IMR-90 (cell line): ENCODE measurements at regions of chr4 and their contacts with region 1.

Region 1: GRCh38 chr4:36812153-36812552 is 432.4 kb upstream of the NWD2 start:
- DNase-seq: no peak
- ATAC-seq: no peak
- H3K4me3 ChIP-seq: no peak overlapping the region
- H3K27ac ChIP-seq: no peak overlapping the region
- H3K4me1 ChIP-seq: no peaks in the 10 kb centered on the region
- H3K27me3 ChIP-seq: no peaks in the 10 kb centered on the region
- CTCF ChIP-seq: no peak
- POLR2A ChIP-seq: no peak
- RAD21 ChIP-seq: no peak

Region 2: GRCh38 chr4:35216636-35217035 is 1595.5 kb before region 1 on chr4:
- CTCF ChIA-PET with region 1: no interaction called
- POLR2A ChIA-PET with region 1: no interaction called
- dilution Hi-C with region 1: no loop called
- in situ Hi-C with region 1: no loop called
- intact Hi-C with region 1: loop called (anchors 10 kb)
- DNase-seq: no peak
- ATAC-seq: no peak
- H3K4me3 ChIP-seq: no peak overlapping the region
- H3K27ac ChIP-seq: no peak overlapping the region
- H3K4me1 ChIP-seq: no peaks in the 10 kb centered on the region
- H3K27me3 ChIP-seq: no peaks in the 10 kb centered on the region
- CTCF ChIP-seq: no peak
- POLR2A ChIP-seq: no peak
- RAD21 ChIP-seq: no peak

Region 3: DNA sequence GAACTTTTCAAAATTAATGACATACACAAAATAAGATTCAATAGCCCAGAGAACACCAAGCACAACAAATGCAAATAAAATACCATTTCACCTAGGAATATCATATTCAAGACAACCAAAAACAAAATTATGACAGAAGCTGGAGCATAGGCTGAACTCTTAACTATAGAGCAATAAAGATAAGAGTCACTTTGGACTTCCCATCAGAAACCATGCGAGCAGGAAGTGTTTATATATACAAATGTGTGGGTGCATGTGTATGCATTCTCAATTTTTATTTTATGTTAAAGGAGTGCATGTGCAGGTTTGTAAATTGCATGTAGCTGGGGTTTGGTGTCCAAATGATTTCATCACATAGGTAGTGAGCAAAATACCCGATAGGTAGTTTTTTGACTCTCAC is 859.4 kb before region 1 on chr4:
- CTCF ChIA-PET with region 1: no interaction called
- POLR2A ChIA-PET with region 1: no interaction called
- dilution Hi-C with region 1: no loop called
- in situ Hi-C with region 1: no loop called
- intact Hi-C with region 1: no loop called
- DNase-seq: no peak
- ATAC-seq: no peak
- H3K4me3 ChIP-seq: no peak overlapping the region
- H3K27ac ChIP-seq: no peak overlapping the region
- H3K4me1 ChIP-seq: no peaks in the 10 kb centered on the region
- H3K27me3 ChIP-seq: no peaks in the 10 kb centered on the region
- CTCF ChIP-seq: no peak
- POLR2A ChIP-seq: no peak
- RAD21 ChIP-seq: no peak